ENCODE measurements at regions of chr2 and their contacts with region 1.

Region 1: DNA sequence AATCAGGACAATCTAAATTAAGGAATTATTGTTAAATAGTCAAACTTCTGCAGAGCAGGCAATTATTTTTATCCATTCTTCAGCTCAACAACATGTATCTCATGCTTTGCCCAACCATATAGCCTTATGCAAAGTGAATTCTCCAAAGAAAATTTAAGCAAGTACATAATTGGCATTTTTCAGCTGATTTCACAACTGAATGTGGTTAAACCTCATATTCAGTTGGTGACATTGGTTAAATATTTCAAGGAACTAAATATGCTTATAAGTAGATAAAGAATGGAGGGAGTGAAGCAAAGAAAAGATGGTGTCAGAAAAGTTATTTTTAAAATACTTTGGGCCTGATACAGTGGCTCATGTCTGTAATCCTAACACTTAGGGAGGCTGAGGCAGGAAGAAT is 816.2 kb downstream of the NRXN1 start:
- DNase-seq: no peak
- H3K4me3 ChIP-seq: no peak overlapping the region
- H3K27ac ChIP-seq: no peak overlapping the region
- H3K4me1 ChIP-seq: no peaks in the 10 kb centered on the region
- H3K27me3 ChIP-seq: no peaks in the 10 kb centered on the region
- CTCF ChIP-seq: no peak
- EP300 ChIP-seq: no peak
- POLR2A ChIP-seq: no peak

Region 2: DNA sequence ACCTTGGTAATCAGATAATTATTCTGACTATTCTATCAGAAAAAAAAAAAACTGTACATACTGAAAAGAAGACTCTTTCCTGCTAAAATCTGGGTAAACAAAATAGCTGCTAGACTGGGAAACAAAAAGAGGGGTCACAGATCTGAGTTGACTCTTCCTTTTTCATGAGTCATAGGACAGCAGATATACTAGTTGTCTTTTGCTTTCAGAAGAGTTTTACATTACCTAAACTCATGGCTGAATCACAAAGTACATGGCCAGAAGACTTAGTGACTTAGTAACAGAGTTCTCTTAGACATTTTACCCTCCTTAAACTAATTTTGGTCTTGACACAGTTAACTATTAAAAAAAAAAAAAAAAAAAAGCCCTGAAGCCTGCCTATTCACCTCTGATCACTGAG is 227.5 kb before region 1 on chr2:
- intact Hi-C with region 1: loop called in 1 of 4 experiments (anchors 5 kb)
- DNase-seq: no peak
- H3K4me3 ChIP-seq: no peak overlapping the region
- H3K27ac ChIP-seq: no peak overlapping the region
- H3K4me1 ChIP-seq: no peaks in the 10 kb centered on the region
- H3K27me3 ChIP-seq: no peaks in the 10 kb centered on the region
- CTCF ChIP-seq: no peak
- EP300 ChIP-seq: no peak
- POLR2A ChIP-seq: no peak

Region 3: DNA sequence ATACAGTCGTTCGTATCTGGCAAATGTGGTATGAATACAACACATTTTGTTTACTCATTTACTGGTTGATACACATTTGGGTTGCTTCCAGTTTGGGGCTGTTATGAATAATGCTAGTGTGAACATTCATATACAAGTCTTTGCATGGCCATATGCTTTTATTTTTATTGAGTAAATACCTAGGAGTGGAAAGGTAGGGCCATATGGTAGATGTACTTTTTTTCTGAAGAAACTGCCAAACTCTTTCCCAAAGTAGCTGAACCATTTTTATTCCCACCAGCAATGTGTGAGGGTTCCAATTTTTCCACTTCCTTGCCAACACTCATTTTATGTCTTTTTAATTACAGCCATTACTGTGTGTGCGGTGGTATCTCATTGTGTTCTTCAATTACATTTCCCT is 1312.4 kb after region 1 on chr2:
- intact Hi-C with region 1: no loop called
- DNase-seq: no peak
- H3K4me3 ChIP-seq: no peak overlapping the region
- H3K27ac ChIP-seq: no peak overlapping the region
- H3K4me1 ChIP-seq: no peaks in the 10 kb centered on the region
- H3K27me3 ChIP-seq: no peaks in the 10 kb centered on the region
- CTCF ChIP-seq: no peak
- EP300 ChIP-seq: no peak
- POLR2A ChIP-seq: no peak

Region 4: GRCh38 chr2:52097076-52097475 is 1881.3 kb after region 1 on chr2:
- intact Hi-C with region 1: no loop called
- DNase-seq: no peak
- H3K4me3 ChIP-seq: no peak overlapping the region
- H3K27ac ChIP-seq: no peak overlapping the region
- H3K4me1 ChIP-seq: no peaks in the 10 kb centered on the region
- H3K27me3 ChIP-seq: no peaks in the 10 kb centered on the region
- CTCF ChIP-seq: no peak
- EP300 ChIP-seq: no peak
- POLR2A ChIP-seq: no peak

Measured in ovary (tissue), 10 donors.